ENCODE measurements at regions of chr17 and their contacts with region 1.

Region 1: DNA sequence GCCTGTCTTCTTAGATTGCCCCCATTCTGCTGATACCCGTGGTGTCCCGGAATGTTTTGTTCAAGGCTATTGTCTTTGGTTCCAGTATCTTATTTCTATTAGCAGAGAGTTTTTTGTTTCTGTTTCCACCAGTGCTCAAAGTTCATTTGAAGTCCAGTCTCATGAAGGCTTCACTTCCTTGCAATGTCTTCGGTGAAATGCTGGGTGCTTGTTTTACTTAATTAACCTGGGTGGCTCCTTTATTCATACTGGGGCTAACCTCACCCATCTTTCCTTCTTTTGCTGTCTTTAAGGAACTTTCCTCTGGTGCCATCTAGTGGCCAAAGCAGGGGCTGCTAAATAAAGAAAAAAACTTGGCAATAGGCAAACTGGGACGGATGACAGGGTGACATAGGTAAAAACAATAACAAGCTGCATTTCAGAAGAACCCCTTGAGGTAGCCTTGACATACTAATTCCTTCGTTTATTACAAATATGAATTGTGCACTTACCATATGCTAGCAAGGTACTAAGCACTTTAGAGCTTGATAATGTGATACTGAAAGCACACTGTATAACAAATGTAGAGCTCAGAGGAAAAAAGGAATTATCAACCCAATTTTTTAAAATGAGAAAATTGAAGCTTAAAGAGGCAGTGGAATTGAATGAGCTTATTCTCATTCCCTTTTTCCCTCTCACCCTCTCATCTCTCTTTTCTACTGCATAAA is 2.8 kb upstream of the SMIM36 start:
- DNase-seq: peak; percentile 78
- H3K4me3 ChIP-seq: no peak overlapping the region
- H3K27ac ChIP-seq: no peak overlapping the region
- H3K4me1 ChIP-seq: peaks cover 0 to 10% (median 0%) of the 10 kb centered on the region in 4 donors
- H3K27me3 ChIP-seq: no peaks in the 10 kb centered on the region
- CTCF ChIP-seq: peak; percentile 84 to 97 (median 90)
- EP300 ChIP-seq: no peak
- POLR2A ChIP-seq: no peak

Region 2: DNA sequence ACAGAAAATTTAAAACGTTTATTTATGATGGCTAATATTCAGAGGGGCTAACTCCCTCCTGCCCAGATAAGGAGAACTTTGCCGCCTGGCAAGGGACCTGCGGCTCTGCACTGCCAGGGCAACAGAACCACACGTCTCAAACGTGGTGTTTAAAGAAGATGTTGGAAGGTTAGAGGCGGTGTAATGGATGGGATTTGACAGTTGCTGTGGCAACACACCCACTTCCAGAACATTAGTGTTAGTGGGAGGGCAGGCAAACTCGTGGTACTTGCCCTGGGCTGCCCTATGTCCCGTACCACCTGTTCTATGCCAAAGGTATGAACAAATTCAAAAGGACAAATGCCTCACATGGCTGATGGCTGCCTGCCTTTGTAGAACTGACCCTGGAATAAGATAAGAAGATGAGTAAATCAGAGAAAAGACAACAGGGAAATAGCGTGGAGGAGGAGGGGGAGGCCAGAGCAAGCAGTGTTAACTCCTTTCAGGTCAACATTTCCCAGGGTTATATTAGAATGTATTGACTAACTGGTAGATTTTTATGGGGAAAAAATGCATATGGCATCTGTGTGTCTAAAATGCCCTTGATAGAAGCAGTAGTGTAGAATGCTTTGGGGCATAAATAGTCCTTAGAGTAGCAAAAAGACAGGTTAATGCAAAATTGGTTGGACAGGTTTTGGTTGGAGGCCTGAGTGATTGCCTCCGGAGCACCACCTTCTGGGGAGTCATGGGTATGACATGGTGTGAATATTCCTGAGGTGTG is 218.4 kb before region 1 on chr17:
- in situ Hi-C with region 1: no loop called
- intact Hi-C with region 1: loop called (anchors 10 kb)
- DNase-seq: peak; percentile 66
- H3K4me3 ChIP-seq: no peak overlapping the region
- H3K27ac ChIP-seq: no peak overlapping the region
- H3K4me1 ChIP-seq: peaks cover 0 to 11% (median 0%) of the 10 kb centered on the region in 4 donors
- H3K27me3 ChIP-seq: no peaks in the 10 kb centered on the region
- CTCF ChIP-seq: peak; percentile 83 to 90 (median 84)
- EP300 ChIP-seq: no peak
- POLR2A ChIP-seq: no peak

Region 3: GRCh38 chr17:55356434-55357328 is 157.4 kb before region 1 on chr17:
- in situ Hi-C with region 1: loop called in 3 of 4 experiments (anchors 10 kb)
- intact Hi-C with region 1: no loop called
- DNase-seq: peak; percentile 72
- H3K4me3 ChIP-seq: no peak overlapping the region
- H3K27ac ChIP-seq: no peak overlapping the region
- H3K4me1 ChIP-seq: no peaks in the 10 kb centered on the region
- H3K27me3 ChIP-seq: no peaks in the 10 kb centered on the region
- CTCF ChIP-seq: peak; percentile 59 to 76 (median 70)
- EP300 ChIP-seq: no peak
- POLR2A ChIP-seq: no peak

Region 4: DNA sequence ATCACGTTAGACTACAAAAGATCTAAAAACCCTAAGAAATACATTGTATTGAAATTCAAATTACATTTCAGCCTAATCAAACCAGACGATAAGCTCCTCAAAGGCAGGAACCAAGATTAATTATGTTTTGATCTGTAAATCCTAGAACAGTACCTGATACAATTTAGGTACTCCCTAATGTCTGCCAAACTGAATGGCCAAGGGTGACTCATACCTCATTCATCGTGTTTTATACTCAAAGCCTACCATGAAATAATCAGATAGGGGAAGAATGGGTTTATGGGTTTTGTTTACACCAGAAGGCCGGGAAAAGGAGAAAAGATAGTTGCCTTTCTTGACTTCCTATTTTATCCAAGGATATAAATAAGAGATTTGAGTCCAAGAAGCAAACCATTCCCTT is 111.7 kb before region 1 on chr17:
- in situ Hi-C with region 1: no loop called
- intact Hi-C with region 1: loop called (anchors 10 kb)
- DNase-seq: no peak
- H3K4me3 ChIP-seq: no peak overlapping the region
- H3K27ac ChIP-seq: peak overlapping the region in 1 of 4 donors; percentile 33
- H3K4me1 ChIP-seq: peaks cover 0 to 10% (median 7%) of the 10 kb centered on the region in 4 donors
- H3K27me3 ChIP-seq: no peaks in the 10 kb centered on the region
- CTCF ChIP-seq: no peak
- EP300 ChIP-seq: no peak
- POLR2A ChIP-seq: no peak

Region 5: GRCh38 chr17:55452139-55452790 is 61.8 kb before region 1 on chr17:
- in situ Hi-C with region 1: no loop called
- intact Hi-C with region 1: no loop called
- DNase-seq: peak; percentile 40
- H3K4me3 ChIP-seq: no peak overlapping the region
- H3K27ac ChIP-seq: peak overlapping the region; percentile 58 to 75 (median 61)
- H3K4me1 ChIP-seq: peaks cover 7 to 73% (median 27%) of the 10 kb centered on the region in 4 donors
- H3K27me3 ChIP-seq: no peaks in the 10 kb centered on the region
- CTCF ChIP-seq: no peak
- EP300 ChIP-seq: peak; percentile 9
- POLR2A ChIP-seq: no peak